GM12878 (cell line): ENCODE measurements at regions of chr4 and their contacts with region 1.

Region 1: GRCh38 chr4:112860830-112861690 is 188.4 kb upstream of the ANK2 start:
- DNase-seq: peak; percentile 7
- ATAC-seq: peak; percentile 73
- H3K4me3 ChIP-seq: no peak overlapping the region
- H3K27ac ChIP-seq: no peak overlapping the region
- H3K4me1 ChIP-seq: no peaks in the 10 kb centered on the region
- H3K27me3 ChIP-seq: no peaks in the 10 kb centered on the region
- CTCF ChIP-seq: no peak
- EP300 ChIP-seq: no peak
- POLR2A ChIP-seq: no peak
- RAD21 ChIP-seq: no peak

Region 2: DNA sequence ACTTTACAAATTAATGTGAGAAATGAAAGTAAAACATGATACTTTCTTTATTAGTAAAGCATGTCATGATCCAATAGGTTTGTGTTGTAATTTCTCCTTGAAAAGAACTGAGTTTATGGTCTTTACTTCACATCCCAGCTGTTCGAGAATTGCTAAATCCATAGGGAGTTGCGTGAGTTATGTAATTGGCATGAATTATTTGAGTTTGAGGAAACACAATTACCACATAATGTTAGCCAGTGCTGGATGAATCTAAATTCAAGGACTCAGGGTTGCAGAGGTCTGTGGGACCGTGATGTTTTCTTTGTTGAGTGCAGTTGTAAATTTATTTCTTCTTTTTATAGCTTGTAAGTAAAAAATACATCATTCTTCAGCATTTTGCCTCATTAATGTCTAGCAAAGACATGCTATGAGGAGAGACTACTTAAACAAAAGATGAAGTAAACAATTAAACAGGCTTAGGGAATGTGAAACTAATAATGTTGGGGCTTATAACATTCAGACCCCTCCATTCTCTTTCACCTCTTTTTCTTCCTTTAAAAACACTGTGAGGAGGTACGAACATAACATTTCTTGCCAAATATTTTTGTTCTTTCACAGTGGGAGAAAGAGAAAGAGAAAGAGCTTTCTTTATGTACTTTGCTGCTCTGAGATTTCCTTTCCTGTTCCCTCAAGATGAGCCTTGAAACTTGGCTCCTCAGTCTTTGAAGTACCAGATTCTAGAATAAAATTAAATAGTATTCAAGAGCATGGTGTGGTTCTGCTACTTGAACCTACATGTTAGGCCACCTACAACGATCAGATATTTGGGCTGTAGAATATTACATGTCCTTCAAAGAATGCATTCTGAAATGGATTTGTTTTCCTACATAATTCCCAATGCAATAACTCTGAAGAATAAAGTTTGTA is 28.8 kb after region 1 on chr4:
- CTCF ChIA-PET with region 1: interaction called, 8 read pairs
- POLR2A ChIA-PET with region 1: interaction called, 10 read pairs
- RAD21 ChIA-PET with region 1: interaction called, 10 read pairs
- SMC1A ChIA-PET with region 1: interaction called, 40 read pairs
- in situ Hi-C with region 1: no loop called
- intact Hi-C with region 1: no loop called
- DNase-seq: peak; percentile 23
- ATAC-seq: peak; percentile 67
- H3K4me3 ChIP-seq: peak overlapping the region; percentile 42
- H3K27ac ChIP-seq: peak overlapping the region; percentile 41; the same call in 1 of the 2 replicates
- H3K4me1 ChIP-seq: peaks cover 4% of the 10 kb centered on the region
- H3K27me3 ChIP-seq: no peaks in the 10 kb centered on the region
- CTCF ChIP-seq: no peak
- EP300 ChIP-seq: no peak
- POLR2A ChIP-seq: no peak
- RAD21 ChIP-seq: no peak

Region 3: GRCh38 chr4:112895811-112896608 is 35.0 kb after region 1 on chr4:
- CTCF ChIA-PET with region 1: interaction called, 5 read pairs
- POLR2A ChIA-PET with region 1: no interaction called
- RAD21 ChIA-PET with region 1: interaction called, 4 read pairs
- SMC1A ChIA-PET with region 1: interaction called, 20 read pairs
- in situ Hi-C with region 1: no loop called
- intact Hi-C with region 1: no loop called
- DNase-seq: peak; percentile 31
- ATAC-seq: peak; percentile 84
- H3K4me3 ChIP-seq: no peak overlapping the region
- H3K27ac ChIP-seq: no peak overlapping the region
- H3K4me1 ChIP-seq: no peaks in the 10 kb centered on the region
- H3K27me3 ChIP-seq: no peaks in the 10 kb centered on the region
- CTCF ChIP-seq: no peak
- EP300 ChIP-seq: no peak
- POLR2A ChIP-seq: no peak
- RAD21 ChIP-seq: no peak